ENCODE measurements at regions of chr9 and their contacts with region 1.

Region 1: DNA sequence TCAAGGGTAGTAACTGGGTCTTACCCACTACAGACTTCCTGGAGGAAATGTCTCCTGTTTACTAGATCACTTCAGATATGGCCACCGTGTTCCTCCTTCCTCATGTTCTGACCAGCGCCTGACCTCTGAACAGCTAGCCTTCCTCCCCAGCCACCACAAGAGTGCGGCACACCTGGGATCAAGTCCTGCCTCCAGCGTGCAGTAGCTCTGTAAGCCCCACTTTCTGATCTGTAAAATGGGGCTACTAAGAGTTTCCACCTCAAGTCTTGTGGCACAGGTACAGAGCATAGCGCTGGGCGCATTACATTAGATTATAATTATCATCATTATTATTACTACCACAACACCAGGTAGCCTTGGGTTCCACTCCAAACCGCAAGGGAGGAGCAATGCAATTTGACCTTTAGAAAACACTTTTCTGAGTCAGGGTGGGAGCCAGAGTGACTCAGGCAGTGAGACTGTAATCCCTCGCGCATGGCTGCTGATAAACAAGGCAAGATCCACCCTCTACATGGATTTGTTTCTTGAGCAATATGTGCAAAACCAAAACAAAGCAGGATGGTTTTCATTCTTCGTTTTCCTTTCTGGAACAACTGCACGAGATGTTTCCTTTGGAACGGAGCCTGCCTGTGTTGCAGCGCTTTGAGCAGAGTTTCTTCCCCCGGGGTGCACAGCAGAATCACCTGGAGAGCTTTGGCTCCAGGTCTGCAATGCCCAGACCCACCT is 65.0 kb upstream of the ANGPTL2 start:
- DNase-seq: peak; percentile 95
- H3K4me3 ChIP-seq: no peak overlapping the region
- H3K27ac ChIP-seq: peak overlapping the region; percentile 84
- H3K4me1 ChIP-seq: peaks cover 22% of the 10 kb centered on the region
- H3K27me3 ChIP-seq: no peaks in the 10 kb centered on the region
- CTCF ChIP-seq: no peak
- POLR2A ChIP-seq: no peak

Region 2: DNA sequence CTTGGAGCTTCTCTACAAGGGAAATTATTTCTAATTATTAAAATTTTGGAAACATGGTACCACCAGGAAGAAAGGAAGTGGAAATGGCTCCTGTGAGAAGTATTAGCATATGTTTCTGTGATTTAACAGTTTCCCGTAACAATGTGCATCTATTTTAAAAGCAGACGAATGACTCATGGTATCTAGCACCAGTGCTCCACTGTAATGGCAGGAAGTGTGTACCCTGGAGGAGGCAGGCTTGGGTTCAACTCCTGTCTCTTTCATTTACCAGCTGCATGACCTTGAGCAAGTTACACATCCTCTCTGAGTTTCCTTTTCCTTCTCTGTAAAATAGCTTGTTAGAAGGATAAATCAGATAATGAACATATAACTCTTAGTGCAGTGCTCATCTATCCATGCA is 24.0 kb before region 1 on chr9:
- CTCF ChIA-PET with region 1: interaction called, 6 read pairs
- POLR2A ChIA-PET with region 1: no interaction called
- dilution Hi-C with region 1: no loop called
- intact Hi-C with region 1: loop called (anchors 1 kb)
- DNase-seq: peak; percentile 96
- H3K4me3 ChIP-seq: no peak overlapping the region
- H3K27ac ChIP-seq: peak overlapping the region; percentile 68
- H3K4me1 ChIP-seq: peaks cover 17% of the 10 kb centered on the region
- H3K27me3 ChIP-seq: no peaks in the 10 kb centered on the region
- CTCF ChIP-seq: no peak
- POLR2A ChIP-seq: no peak

Region 3: GRCh38 chr9:127199001-127199791 is 11.8 kb after region 1 on chr9:
- CTCF ChIA-PET with region 1: interaction called, 15 read pairs
- POLR2A ChIA-PET with region 1: no interaction called
- dilution Hi-C with region 1: no loop called
- intact Hi-C with region 1: no loop called
- DNase-seq: peak; percentile 81
- H3K4me3 ChIP-seq: no peak overlapping the region
- H3K27ac ChIP-seq: no peak overlapping the region
- H3K4me1 ChIP-seq: no peaks in the 10 kb centered on the region
- H3K27me3 ChIP-seq: no peaks in the 10 kb centered on the region
- CTCF ChIP-seq: peak; percentile 82 to 89
- POLR2A ChIP-seq: no peak